Naive thymus-derived CD4-positive, alpha-beta T cell (primary cell): ENCODE measurements at regions of chr14 and their contacts with region 1.

Region 1: GRCh38 chr14:81533536-81534343 is at the start of gene SEL1L:
- DNase-seq: peak; percentile 98 to 100 (median 99)
- ATAC-seq: peak; percentile 96
- H3K4me3 ChIP-seq: peak within 1 kb of the TSS; percentile 87
- H3K4me3 Mint-ChIP-seq: peak within 1 kb of the TSS; percentile 85 to 98 (median 96)
- H3K27ac ChIP-seq: peak within 1 kb of the TSS; percentile 77
- H3K27ac Mint-ChIP-seq: peak within 1 kb of the TSS; percentile 81 to 97 (median 92)
- H3K4me1 ChIP-seq: peaks cover 24% of the 10 kb centered on the region in 2 donors
- H3K4me1 Mint-ChIP-seq: peaks cover 33 to 71% (median 68%) of the 10 kb centered on the region in 7 donors
- H3K27me3 ChIP-seq: no peaks in the 10 kb centered on the region
- H3K27me3 Mint-ChIP-seq: peaks cover 0 to 3% (median under 1%) of the 10 kb centered on the region in 5 donors
- total RNA-seq, gene SEL1L: 43.5 to 72.2 (median 57.0) TPM

Region 2: DNA sequence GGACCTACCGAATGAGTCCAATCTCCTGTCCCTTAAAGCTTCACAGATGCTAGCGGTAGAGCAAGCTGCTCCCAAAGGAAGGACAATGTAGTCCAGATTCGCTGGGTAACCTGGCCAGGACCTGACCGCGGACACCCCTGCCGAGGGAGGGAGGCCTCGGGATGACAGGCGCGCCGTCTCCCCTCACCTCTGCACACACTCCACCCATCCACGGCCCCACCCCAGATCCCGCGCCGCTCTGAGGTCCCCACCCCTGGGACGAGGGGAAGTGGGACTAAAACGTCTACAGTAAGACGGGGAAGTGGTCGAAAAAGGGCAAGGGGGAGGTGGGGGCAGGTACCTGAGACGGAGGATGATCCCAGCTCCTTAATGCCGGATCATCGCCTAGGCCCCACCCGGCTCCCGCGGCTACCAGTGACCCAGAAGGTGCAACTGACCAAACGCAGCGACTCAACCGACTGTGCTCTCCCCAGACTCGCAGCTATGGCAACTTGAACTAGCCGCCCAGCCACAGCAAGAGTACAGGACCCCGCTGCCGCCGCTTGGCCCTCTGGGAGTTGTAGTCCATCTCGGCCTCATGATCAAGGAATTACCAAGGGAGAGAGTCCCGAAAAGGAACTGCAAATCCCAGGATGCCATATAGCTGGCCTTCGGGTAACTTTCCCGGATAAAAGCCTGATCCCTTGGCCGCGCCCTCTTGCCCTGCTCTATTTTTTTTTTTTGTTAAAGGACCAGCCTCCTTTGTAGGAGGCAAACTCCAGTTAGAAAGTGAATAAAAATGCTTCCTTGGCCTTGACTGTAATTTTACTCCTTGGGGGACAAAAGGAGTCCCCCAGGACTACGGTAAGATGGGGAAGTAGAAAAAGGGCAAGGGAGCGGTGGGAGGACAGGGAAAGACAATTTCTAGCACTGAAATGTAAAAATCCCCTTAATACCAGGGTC is 592.2 kb before region 1 on chr14 and contains the start of gene CEP128:
- CTCF ChIA-PET with region 1: no interaction called
- POLR2A ChIA-PET with region 1: no interaction called
- intact Hi-C with region 1: loop called (anchors 1 to 2 kb)
- DNase-seq: peak; percentile 30 to 82 (median 61)
- ATAC-seq: peak; percentile 93
- H3K4me3 ChIP-seq: peak within 1 kb of the TSS; percentile 78
- H3K4me3 Mint-ChIP-seq: peak within 1 kb of the TSS; percentile 84 to 93 (median 89)
- H3K27ac ChIP-seq: peak within 1 kb of the TSS; percentile 44
- H3K27ac Mint-ChIP-seq: peak within 1 kb of the TSS; percentile 52 to 89 (median 78)
- H3K4me1 ChIP-seq: peaks cover 10 to 11% of the 10 kb centered on the region in 2 donors
- H3K4me1 Mint-ChIP-seq: peaks cover 18 to 33% (median 20%) of the 10 kb centered on the region in 7 donors
- H3K27me3 ChIP-seq: no peaks in the 10 kb centered on the region
- H3K27me3 Mint-ChIP-seq: peaks cover 0 to 6% (median 4%) of the 10 kb centered on the region in 5 donors
- total RNA-seq, gene CEP128: 7.7 to 22.8 (median 10.1) TPM

Region 3: GRCh38 chr14:81464247-81465002 is 69.3 kb before region 1 on chr14:
- CTCF ChIA-PET with region 1: interaction called, 7 read pairs
- POLR2A ChIA-PET with region 1: interaction called, 6 read pairs
- intact Hi-C with region 1: loop called in 1 of 2 experiments (anchors 1 kb)
- DNase-seq: peak; percentile 15 to 86 (median 75)
- ATAC-seq: peak; percentile 90
- H3K4me3 ChIP-seq: peak overlapping the region; percentile 85
- H3K4me3 Mint-ChIP-seq: peak overlapping the region; percentile 76 to 91 (median 88)
- H3K27ac ChIP-seq: peak overlapping the region; percentile 76
- H3K27ac Mint-ChIP-seq: peak overlapping the region; percentile 70 to 98 (median 91)
- H3K4me1 ChIP-seq: no peaks in the 10 kb centered on the region
- H3K4me1 Mint-ChIP-seq: peaks cover 0 to 14% (median 8%) of the 10 kb centered on the region in 7 donors
- H3K27me3 ChIP-seq: no peaks in the 10 kb centered on the region
- H3K27me3 Mint-ChIP-seq: no peaks in the 10 kb centered on the region

Region 4: DNA sequence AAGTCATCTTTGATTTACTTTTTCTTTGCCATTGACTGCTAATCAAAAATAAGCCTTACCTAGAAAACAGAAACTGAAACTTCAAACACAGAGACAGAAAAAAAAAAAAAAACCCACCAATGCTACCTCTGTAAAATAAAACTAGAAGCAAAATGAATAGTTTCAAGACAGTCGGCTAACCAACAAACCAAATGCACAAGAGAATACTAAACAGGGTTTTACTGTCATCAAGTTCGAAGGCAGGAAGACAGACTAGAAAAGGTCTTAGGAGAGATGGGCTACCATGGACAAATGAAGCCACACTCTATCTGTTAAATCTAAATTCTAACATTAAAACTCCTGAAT is 59.6 kb before region 1 on chr14:
- CTCF ChIA-PET with region 1: interaction called, 5 read pairs
- POLR2A ChIA-PET with region 1: no interaction called
- intact Hi-C with region 1: loop called in 1 of 2 experiments (anchors 1 kb)
- DNase-seq: peak in 5 of 9 donors; percentile 10 to 25 (median 18)
- ATAC-seq: peak; percentile 54
- H3K4me3 ChIP-seq: peak overlapping the region; percentile 4
- H3K4me3 Mint-ChIP-seq: peak overlapping the region in 9 of 10 donors; percentile 59 to 89 (median 75)
- H3K27ac ChIP-seq: peak overlapping the region; percentile 68
- H3K27ac Mint-ChIP-seq: peak overlapping the region; percentile 84 to 97 (median 91)
- H3K4me1 ChIP-seq: peaks cover 9 to 14% of the 10 kb centered on the region in 2 donors
- H3K4me1 Mint-ChIP-seq: peaks cover 19 to 58% (median 38%) of the 10 kb centered on the region in 7 donors
- H3K27me3 ChIP-seq: no peaks in the 10 kb centered on the region
- H3K27me3 Mint-ChIP-seq: no peaks in the 10 kb centered on the region

Region 5: DNA sequence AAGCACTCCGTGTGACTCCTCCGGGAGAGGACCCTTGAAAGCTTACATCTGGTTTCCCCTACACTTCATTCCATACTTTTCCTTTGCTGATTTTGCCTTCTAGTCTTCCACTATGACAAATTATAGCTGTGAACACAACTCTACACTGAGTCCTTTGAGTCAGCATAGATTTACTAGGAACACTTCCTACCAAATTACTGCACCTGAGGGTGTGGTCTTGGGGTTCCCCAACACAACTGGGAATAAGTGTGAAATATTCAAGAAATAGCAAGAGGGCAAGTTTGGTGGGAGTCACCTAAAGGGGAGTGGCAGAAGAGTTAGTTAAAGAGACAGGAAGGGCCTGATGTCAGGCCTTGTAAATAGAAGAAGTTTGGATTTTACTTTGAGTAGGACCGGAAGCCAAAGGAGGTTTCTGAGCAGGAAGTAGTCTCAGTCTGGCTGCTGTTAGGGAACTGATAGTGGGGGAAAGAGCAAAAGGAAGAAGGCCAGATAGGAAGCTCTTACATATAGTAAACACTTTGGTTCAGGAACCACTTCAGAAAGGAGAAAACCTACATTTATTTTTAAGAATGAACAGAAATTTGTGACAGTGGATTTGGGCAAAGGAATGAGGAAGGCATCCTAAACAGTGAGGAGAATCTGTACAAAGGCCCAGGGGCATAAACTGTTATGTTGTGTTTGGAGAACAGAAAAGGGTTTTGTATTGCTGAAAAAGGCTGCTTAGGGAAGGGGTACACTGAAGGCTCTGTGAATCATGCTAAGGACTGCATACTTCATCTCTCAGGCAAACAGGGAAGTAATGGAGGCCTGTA is 14.3 kb before region 1 on chr14:
- CTCF ChIA-PET with region 1: interaction called, 3 read pairs
- POLR2A ChIA-PET with region 1: interaction called, 18 read pairs
- intact Hi-C with region 1: loop called in 1 of 2 experiments (anchors 1 kb)
- DNase-seq: peak in 3 of 9 donors; percentile 9 to 17 (median 16)
- ATAC-seq: peak; percentile 78
- H3K4me3 ChIP-seq: no peak overlapping the region
- H3K4me3 Mint-ChIP-seq: peak overlapping the region; percentile 44 to 68 (median 54)
- H3K27ac ChIP-seq: peak overlapping the region; percentile 24
- H3K27ac Mint-ChIP-seq: peak overlapping the region; percentile 68 to 94 (median 85)
- H3K4me1 ChIP-seq: peaks cover 18 to 22% of the 10 kb centered on the region in 2 donors
- H3K4me1 Mint-ChIP-seq: peaks cover 25 to 54% (median 50%) of the 10 kb centered on the region in 7 donors
- H3K27me3 ChIP-seq: no peaks in the 10 kb centered on the region
- H3K27me3 Mint-ChIP-seq: no peaks in the 10 kb centered on the region

Region 6: DNA sequence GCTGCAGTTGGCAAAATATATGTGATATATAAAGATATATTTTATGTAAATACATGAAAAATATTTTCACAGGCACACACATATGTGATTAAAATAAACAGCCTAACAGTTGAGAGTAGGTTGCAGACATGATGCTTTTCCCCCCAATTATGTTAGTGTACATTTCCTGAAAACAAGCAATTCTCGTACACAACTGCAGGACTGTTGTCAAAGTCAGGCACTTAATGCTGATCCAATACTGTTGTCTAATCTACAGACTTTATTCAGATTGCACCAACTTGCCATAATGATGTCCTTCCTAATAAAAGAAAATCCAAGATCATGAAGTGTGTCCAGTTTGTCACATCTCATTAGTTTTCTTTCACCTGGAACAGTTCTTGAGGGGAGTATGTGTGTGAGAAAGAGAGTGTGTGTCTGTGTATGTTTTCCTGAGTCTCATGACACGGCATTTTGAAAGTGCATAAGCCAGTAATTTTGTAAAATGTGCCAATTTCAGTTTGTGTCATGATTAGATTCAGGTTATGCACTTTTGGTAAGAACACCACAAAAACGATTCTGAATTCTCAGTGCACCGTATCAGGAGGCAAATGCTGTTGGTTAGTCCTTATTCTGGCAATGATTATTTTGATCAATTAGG is 16.4 kb after region 1 on chr14:
- CTCF ChIA-PET with region 1: no interaction called
- POLR2A ChIA-PET with region 1: no interaction called
- intact Hi-C with region 1: no loop called
- DNase-seq: no peak
- ATAC-seq: no peak
- H3K4me3 ChIP-seq: no peak overlapping the region
- H3K4me3 Mint-ChIP-seq: peak overlapping the region in 1 of 10 donors; percentile 16
- H3K27ac ChIP-seq: no peak overlapping the region
- H3K27ac Mint-ChIP-seq: peak overlapping the region in 1 of 9 donors; percentile 4
- H3K4me1 ChIP-seq: no peaks in the 10 kb centered on the region
- H3K4me1 Mint-ChIP-seq: peaks cover 0 to 19% (median 0%) of the 10 kb centered on the region in 7 donors
- H3K27me3 ChIP-seq: no peaks in the 10 kb centered on the region
- H3K27me3 Mint-ChIP-seq: peaks cover 0 to 4% (median 0%) of the 10 kb centered on the region in 5 donors

Region 7: DNA sequence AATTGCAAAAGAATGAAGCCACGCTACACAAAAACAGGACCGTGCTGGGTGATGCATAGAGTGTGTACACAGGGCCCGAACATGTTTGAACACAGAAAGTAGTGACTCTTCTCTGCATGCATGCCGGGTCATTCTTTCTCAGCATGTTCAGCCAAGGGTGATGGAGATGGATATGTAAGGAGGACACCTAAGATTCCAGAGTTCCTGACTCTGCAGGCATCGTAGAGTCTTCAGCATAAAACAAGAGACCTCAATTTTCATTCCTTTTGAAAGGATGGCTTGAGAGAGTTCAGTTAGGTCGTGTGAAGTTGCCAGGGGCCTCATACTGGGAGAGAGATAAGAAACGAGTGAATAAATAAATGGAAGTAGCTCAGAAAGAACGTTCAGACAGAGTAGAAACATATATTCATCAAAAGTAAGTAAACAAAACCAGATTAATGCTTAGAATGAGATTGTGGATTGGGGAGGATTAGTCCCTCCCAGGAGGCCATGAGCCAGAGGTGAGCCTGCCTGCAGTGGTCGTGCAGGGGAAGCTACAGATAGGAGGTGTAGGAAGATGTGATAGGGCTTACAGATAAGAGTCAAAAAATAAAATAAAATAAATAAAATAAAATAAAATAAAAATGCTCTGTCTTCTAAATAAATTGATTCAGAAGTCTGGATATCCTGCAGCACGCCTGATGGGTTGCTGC is 27.5 kb after region 1 on chr14:
- CTCF ChIA-PET with region 1: no interaction called
- POLR2A ChIA-PET with region 1: no interaction called
- intact Hi-C with region 1: no loop called
- DNase-seq: no peak
- ATAC-seq: no peak
- H3K4me3 ChIP-seq: no peak overlapping the region
- H3K4me3 Mint-ChIP-seq: no peak overlapping the region
- H3K27ac ChIP-seq: no peak overlapping the region
- H3K27ac Mint-ChIP-seq: no peak overlapping the region
- H3K4me1 ChIP-seq: no peaks in the 10 kb centered on the region
- H3K4me1 Mint-ChIP-seq: no peaks in the 10 kb centered on the region
- H3K27me3 ChIP-seq: no peaks in the 10 kb centered on the region
- H3K27me3 Mint-ChIP-seq: peaks cover 0 to 13% (median 7%) of the 10 kb centered on the region in 5 donors

Region 8: GRCh38 chr14:82366803-82367202 is 833.1 kb after region 1 on chr14:
- CTCF ChIA-PET with region 1: no interaction called
- POLR2A ChIA-PET with region 1: no interaction called
- intact Hi-C with region 1: no loop called
- DNase-seq: no peak
- ATAC-seq: no peak
- H3K4me3 ChIP-seq: no peak overlapping the region
- H3K4me3 Mint-ChIP-seq: no peak overlapping the region
- H3K27ac ChIP-seq: no peak overlapping the region
- H3K27ac Mint-ChIP-seq: no peak overlapping the region
- H3K4me1 ChIP-seq: no peaks in the 10 kb centered on the region
- H3K4me1 Mint-ChIP-seq: no peaks in the 10 kb centered on the region
- H3K27me3 ChIP-seq: no peaks in the 10 kb centered on the region
- H3K27me3 Mint-ChIP-seq: no peaks in the 10 kb centered on the region